PC-9 (cell line): ENCODE measurements at regions of chr2 and their contacts with region 1.

Region 1: DNA sequence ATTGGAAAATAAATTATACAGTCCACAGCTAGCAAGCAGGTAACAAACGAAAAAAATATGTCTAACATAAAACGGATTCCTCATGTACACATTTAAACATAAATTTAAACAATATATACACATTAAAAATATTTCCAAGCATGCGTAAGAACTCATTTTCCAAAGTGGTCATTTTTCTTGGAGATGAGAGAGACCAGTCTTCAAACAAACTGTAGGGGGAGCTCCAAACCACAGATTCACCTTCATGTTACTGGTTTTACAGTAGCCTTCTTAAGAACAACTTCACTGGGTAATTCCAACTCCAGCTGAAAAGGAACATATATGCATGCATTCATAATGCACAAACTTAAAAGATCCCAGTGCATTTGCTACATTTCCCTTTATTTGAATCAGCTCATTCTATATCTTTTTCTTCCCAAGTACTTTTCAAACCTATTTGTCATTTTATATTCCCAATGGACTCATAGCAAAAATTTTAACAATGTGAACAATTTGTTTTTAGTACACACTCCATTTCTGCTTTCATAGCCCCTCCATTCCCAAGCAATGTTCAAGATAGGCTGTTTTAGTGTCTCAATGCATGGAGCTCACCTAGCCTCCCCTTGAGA is 4.7 kb upstream of the STAMBP start:
- DNase-seq: peak in 1 of 2 experiments; percentile 49
- H3K4me3 ChIP-seq: no peak overlapping the region
- H3K27ac ChIP-seq: no peak overlapping the region
- H3K4me1 ChIP-seq: peaks cover 10% of the 10 kb centered on the region; the same call in 1 of the 2 replicates
- H3K27me3 ChIP-seq: no peaks in the 10 kb centered on the region
- CTCF ChIP-seq: peak; percentile 94

Region 2: GRCh38 chr2:74081030-74081762 is 257.2 kb after region 1 on chr2:
- CTCF ChIA-PET with region 1: interaction called, 3 read pairs
- POLR2A ChIA-PET with region 1: interaction called, 3 read pairs
- intact Hi-C with region 1: loop called (anchors 1 kb)
- DNase-seq: no peak
- H3K4me3 ChIP-seq: no peak overlapping the region
- H3K27ac ChIP-seq: no peak overlapping the region
- H3K4me1 ChIP-seq: no peaks in the 10 kb centered on the region
- H3K27me3 ChIP-seq: no peaks in the 10 kb centered on the region
- CTCF ChIP-seq: no peak

Region 3: GRCh38 chr2:74261204-74261864 is 437.3 kb after region 1 on chr2:
- CTCF ChIA-PET with region 1: no interaction called
- POLR2A ChIA-PET with region 1: no interaction called
- intact Hi-C with region 1: loop called (anchors 1 kb)
- DNase-seq: peak; percentile 72 to 81
- H3K4me3 ChIP-seq: no peak overlapping the region
- H3K27ac ChIP-seq: no peak overlapping the region
- H3K4me1 ChIP-seq: peaks cover 5% of the 10 kb centered on the region
- H3K27me3 ChIP-seq: no peaks in the 10 kb centered on the region
- CTCF ChIP-seq: peak; percentile 81